HCT116 (cell line): ENCODE measurements at regions of chr16 and their contacts with region 1.

Region 1: DNA sequence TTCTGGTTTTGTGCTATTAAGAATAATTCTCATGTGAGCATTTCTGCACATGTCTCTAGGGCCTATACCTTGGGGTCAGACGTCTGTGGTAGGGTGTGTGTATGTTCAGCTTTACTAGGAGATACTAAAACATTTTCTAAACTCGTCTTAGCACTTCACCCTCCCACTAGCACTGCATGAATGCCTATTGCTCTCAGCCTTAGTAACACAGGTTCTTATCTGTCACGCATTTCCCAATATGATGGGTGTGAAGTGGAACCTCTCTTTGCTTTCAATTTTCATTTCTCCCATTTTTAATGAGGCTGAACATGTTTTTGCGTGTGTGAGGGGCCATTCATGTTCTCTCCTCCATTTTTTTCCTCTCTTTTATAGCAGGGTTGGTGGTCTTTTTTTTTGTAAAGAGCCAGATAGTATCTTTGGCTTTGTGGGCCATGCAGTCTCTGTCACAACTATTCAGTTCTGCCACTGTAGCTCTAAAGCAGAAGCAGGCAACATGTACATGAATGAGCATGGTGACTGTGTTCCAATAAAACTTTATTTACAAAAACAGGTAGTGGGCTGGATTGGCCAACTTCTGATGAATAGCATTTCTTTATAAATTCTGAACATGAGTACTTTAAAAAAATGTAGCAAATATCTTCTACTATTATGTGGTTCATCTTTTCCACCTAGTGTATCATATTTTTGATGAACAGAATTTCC is 354.0 kb downstream of the XYLT1 start:
- DNase-seq: no peak
- ATAC-seq: no peak
- H3K4me3 ChIP-seq: no peak overlapping the region
- H3K27ac ChIP-seq: no peak overlapping the region
- H3K4me1 ChIP-seq: no peaks in the 10 kb centered on the region
- H3K27me3 ChIP-seq: peaks cover 12% of the 10 kb centered on the region; the same call in 1 of the 2 replicates
- CTCF ChIP-seq: no peak
- POLR2A ChIP-seq: no peak
- RAD21 ChIP-seq: no peak

Region 2: GRCh38 chr16:17173281-17173680 is 56.5 kb after region 1 on chr16:
- CTCF ChIA-PET with region 1: no interaction called
- POLR2A ChIA-PET with region 1: no interaction called
- RAD21 ChIA-PET with region 1: no interaction called
- intact Hi-C with region 1: loop called (anchors 10 kb)
- DNase-seq: no peak
- ATAC-seq: no peak
- H3K4me3 ChIP-seq: no peak overlapping the region
- H3K27ac ChIP-seq: no peak overlapping the region
- H3K4me1 ChIP-seq: no peaks in the 10 kb centered on the region
- H3K27me3 ChIP-seq: peaks cover 36% of the 10 kb centered on the region
- CTCF ChIP-seq: no peak
- POLR2A ChIP-seq: no peak
- RAD21 ChIP-seq: no peak